Right ventricle myocardium inferior (tissue), 1 donor: ENCODE measurements at regions of chr4 and their contacts with region 1.

Region 1: GRCh38 chr4:73662709-73663546 is 42.7 kb upstream of the RASSF6 start:
- DNase-seq: no peak
- ATAC-seq: no peak

Region 2: DNA sequence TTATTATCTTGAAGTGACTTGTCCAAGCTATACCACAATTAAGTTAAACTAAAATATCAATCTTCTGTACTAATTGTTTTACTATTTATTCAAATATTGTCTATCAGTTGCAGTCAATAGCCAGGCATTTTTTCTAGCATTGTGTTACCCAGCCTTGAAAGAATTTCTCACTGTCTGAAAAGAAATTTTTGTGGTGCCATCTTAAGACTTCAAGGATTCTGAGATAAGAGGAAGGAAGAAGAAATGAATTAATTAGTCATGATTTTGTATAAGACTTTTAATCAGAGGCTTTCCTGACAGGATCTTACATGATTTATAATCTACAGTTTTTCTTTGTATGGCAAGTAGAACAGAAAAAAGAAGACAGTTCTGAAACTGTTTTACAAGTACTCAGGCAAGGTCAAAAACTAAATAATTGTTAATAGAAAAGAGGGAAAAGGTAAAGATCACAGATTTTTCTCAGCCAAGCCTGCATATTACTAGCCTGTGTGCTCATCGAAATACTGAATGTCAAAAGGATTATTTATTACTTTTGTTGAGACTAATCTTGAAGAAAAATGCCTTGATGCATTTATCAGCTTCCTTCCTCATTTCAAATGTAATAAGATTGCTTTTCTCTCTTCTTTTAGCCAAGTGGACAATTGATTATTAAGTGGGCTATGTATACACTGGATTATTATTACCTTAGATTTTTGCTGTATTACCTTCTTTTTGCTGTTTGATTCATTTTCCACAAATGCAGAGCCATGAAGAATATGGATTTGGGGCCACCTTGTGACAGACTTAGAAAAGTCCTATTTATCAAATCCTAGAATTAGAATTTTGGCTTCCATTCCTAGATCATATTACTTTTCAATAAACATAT is 260.1 kb after region 1 on chr4:
- intact Hi-C with region 1: loop called (anchors 5 kb)
- DNase-seq: no peak
- ATAC-seq: no peak